Activated naive CD8-positive, alpha-beta T cell treated with anti-CD3 and anti-CD28 coated beads, Interleukin-2, amount 10 ng/mL, durations not matched to agents 7 days and 5 days (primary cell): ENCODE measurements at regions of chr10 and their contacts with region 1.

Region 1: DNA sequence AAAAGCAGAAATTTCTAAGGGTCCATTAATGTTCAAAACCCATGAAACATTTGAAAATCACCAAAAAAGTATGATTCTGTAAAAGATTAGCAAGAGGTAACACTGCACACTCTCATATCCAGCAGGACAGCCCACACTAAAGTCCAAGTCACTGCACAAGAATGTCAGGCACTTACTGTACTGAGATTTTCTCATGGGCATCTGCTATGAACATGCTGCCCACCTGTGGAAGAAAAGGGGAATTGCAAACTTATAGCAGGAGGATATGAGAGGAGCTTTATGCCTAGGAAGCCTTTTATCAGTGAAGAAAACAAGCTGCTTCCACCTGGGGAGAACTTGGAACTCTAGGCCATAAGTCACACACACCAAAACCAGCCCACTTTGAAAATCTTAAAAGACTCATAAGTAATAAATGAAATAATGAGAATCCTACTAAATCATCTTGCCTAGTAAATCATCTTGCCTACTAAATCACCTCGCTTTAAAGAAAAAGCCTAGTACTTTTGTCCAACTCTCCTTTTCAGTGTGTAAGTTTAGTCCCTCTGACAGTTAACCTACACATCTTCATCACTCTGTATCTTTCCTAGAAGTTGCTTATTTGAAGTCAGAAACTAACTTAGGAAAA is 46.1 kb downstream of the ARMH3 start:
- DNase-seq: no peak
- ATAC-seq: peak; percentile 87
- H3K4me3 Mint-ChIP-seq: no peak overlapping the region
- H3K27ac Mint-ChIP-seq: no peak overlapping the region
- H3K4me1 Mint-ChIP-seq: no peaks in the 10 kb centered on the region
- H3K27me3 Mint-ChIP-seq: no peaks in the 10 kb centered on the region

Region 2: DNA sequence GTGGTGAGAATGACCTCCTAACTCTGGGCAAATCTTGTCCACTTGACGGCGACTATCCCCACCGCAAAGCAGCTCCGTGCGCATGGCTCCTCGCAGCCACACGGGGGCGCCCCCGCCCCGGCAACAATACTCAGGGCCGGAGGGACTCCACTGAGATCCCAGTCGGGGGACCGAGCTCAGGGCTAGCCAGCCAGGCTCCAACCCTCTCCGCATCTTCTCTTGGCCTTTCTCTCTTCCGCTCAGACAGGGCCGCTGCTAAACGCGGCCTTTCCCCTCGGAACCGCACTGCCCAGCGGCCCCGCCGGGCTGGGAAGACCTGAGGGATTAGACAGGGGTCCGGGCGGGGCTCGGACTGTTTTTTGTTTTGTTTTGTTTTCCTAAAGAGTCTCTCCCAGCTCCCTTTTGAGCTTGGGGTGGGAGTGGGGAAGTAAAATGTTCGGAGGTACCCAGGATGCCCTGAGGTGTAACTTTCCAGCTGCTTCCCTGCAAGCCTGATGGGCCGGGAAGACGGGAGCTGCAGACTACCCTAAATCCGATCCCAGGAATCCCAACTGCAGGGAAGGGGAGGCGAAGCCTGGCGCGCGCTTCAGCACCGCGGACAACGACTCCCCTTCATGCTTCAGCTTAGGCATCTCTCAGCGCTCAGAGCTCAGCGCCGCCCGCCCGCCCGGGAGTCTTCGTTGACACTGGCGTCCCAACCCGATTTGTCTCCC is 169.0 kb before region 1 on chr10:
- POLR2A ChIA-PET with region 1: interaction called, 13 read pairs
- DNase-seq: peak; percentile 85
- ATAC-seq: peak; percentile 66
- H3K4me3 Mint-ChIP-seq: peak overlapping the region; percentile 89
- H3K27ac Mint-ChIP-seq: no peak overlapping the region
- H3K4me1 Mint-ChIP-seq: peaks cover 33% of the 10 kb centered on the region
- H3K27me3 Mint-ChIP-seq: peaks cover 21% of the 10 kb centered on the region

Region 3: DNA sequence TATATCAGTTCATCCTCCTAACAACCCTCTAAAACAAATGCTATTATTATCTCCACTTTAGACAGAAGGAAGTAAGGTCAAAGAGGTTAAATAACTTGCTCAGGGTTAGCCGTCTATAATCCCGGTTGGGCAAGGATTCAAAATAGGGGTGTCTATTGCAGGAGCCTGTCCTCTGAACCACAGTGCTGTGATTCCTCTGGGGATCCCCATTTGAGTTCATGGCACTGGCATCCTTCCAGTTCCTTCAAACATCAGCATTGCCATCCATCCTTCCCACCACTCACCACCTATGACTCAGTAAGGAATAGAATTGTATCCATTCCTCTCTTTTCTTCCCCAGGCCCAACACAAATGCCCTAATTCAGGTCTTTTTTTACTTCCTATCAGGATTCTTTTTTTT is 80.9 kb after region 1 on chr10:
- POLR2A ChIA-PET with region 1: no interaction called
- DNase-seq: no peak
- ATAC-seq: no peak
- H3K4me3 Mint-ChIP-seq: no peak overlapping the region
- H3K27ac Mint-ChIP-seq: no peak overlapping the region
- H3K4me1 Mint-ChIP-seq: no peaks in the 10 kb centered on the region
- H3K27me3 Mint-ChIP-seq: no peaks in the 10 kb centered on the region